ENCODE measurements at regions of chr3 and their contacts with region 1.

Region 1: DNA sequence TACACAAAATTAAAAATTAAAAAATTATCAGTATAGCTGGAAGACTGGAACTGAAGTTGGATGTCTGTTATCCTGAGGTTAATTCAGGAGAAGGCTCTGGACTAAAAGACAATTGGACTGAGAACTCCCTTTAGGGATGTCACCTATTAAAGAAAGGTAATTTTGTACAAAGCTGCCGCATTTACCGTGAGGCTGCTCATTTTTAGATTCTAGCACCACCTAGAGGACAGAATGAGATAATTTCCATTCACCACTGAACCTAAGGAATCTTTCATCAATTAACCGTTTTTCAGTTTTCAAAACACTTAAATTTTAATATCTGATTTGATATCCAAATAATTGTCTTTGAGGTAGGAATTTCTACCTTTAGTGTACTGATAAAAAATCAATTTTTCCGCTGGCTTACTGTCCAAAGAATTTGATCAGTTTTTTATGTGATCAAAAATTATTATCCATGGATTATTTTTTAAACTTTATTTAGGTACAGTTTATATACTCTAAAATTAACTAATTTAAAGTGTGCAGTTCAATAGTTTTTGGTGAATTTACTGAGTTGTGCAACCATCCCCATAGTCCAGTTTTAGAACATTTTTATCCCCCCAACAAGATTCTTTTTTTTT is 106.7 kb upstream of the TNIK start:
- DNase-seq: peak; percentile 26 to 29
- ATAC-seq: peak in 1 of 2 experiments; percentile 70; a peak in 3 of 6 replicates
- H3K4me3 ChIP-seq: no peak overlapping the region
- H3K27ac ChIP-seq: no peak overlapping the region
- H3K4me1 ChIP-seq: peaks cover 18% of the 10 kb centered on the region
- CTCF ChIP-seq: peak; percentile 79
- EP300 ChIP-seq: no peak
- POLR2A ChIP-seq: no peak
- RAD21 ChIP-seq: peak; percentile 86

Region 2: DNA sequence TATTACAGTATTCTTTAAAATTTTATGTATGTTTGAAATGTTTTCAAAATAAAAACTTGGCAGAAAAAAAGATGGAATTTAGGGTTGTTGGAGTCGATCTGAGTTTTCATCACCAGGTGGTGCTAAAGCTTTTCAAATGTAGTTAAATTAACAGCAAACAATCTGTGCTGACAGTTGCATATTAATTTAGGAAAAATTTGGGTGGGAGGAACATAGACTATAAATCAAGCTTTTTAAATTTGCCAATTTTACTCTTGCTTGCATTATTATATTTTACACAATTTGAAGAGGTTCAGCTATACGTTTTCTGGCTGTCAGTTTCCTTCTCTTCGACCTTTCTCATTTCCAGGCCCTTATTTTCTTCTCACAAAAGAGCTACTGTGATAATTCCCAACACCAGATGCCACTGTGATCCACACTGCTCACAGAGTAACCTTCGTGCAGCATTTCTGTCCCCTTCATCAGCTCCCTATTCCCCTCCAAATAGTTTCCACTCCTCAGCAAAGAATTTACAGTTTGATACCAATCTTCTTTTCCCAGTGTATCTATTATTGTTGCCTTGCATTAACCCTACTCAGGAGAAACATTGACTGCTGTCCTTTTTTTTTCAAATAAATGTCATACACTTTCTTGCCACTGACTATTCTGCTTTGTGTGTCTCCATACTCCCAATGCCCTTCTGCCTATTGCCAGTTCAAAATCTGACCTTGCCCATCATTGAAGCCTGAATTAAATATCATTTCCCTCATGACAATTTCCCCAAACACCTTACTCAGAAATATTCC is 605.1 kb before region 1 on chr3:
- CTCF ChIA-PET with region 1: interaction called, 19 read pairs
- POLR2A ChIA-PET with region 1: no interaction called
- DNase-seq: peak in 1 of 2 experiments; percentile 33
- ATAC-seq: peak in 1 of 2 experiments; percentile 45; a peak in 2 of 6 replicates
- H3K4me3 ChIP-seq: no peak overlapping the region
- H3K27ac ChIP-seq: peak overlapping the region; percentile 52 to 72
- H3K4me1 ChIP-seq: peaks cover 13% of the 10 kb centered on the region
- CTCF ChIP-seq: peak; percentile 81
- EP300 ChIP-seq: no peak
- POLR2A ChIP-seq: no peak
- RAD21 ChIP-seq: peak; percentile 77 to 94

Region 3: DNA sequence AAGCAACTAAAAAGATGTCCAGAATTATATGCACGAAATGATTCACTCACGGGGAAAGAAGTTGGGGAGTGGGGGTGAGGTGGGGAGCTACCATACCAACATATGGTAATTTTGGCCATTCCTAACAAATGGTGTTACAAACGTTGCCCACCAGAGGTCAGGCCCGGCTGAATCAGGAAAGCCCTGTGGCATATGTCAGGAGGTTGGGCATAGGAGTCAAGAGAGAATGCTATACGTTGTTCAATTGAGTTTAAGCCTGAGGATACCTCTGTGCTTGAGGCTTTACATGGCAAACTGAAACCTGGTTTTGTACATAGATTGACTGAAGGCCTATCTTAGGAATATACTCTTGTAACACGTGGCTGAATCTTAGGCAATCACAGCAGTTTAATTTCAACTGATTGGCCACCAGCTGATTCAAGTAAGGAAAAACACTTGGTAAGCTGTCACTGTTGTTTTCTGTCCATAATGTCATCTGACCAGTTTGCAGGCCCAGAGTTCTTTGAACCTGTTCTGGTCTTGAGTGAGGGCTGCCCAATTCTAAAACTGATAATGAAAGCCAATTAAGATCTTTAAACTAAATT is 517.0 kb before region 1 on chr3:
- CTCF ChIA-PET with region 1: interaction called, 22 read pairs
- POLR2A ChIA-PET with region 1: no interaction called
- DNase-seq: peak; percentile 39 to 59
- ATAC-seq: peak; percentile 89 to 92
- H3K4me3 ChIP-seq: no peak overlapping the region
- H3K27ac ChIP-seq: peak overlapping the region; percentile 19 to 60; a peak in 4 of 6 replicates
- H3K4me1 ChIP-seq: peaks cover 36% of the 10 kb centered on the region
- CTCF ChIP-seq: peak; percentile 63
- EP300 ChIP-seq: no peak
- POLR2A ChIP-seq: no peak
- RAD21 ChIP-seq: peak; percentile 84 to 86

Region 4: GRCh38 chr3:171187706-171188290 is 379.1 kb before region 1 on chr3:
- CTCF ChIA-PET with region 1: interaction called, 27 read pairs
- POLR2A ChIA-PET with region 1: no interaction called
- DNase-seq: peak; percentile 9 to 28
- ATAC-seq: peak in 1 of 2 experiments; percentile 82; a peak in 3 of 6 replicates
- H3K4me3 ChIP-seq: no peak overlapping the region
- H3K27ac ChIP-seq: no peak overlapping the region
- H3K4me1 ChIP-seq: peaks cover 23% of the 10 kb centered on the region
- CTCF ChIP-seq: peak; percentile 59
- EP300 ChIP-seq: no peak
- POLR2A ChIP-seq: no peak
- RAD21 ChIP-seq: peak; percentile 63 to 64

Region 5: GRCh38 chr3:171498921-171499320 is 68.0 kb before region 1 on chr3:
- CTCF ChIA-PET with region 1: no interaction called
- POLR2A ChIA-PET with region 1: no interaction called
- DNase-seq: no peak
- ATAC-seq: no peak
- H3K4me3 ChIP-seq: no peak overlapping the region
- H3K27ac ChIP-seq: no peak overlapping the region
- H3K4me1 ChIP-seq: no peaks in the 10 kb centered on the region
- CTCF ChIP-seq: no peak
- EP300 ChIP-seq: no peak
- POLR2A ChIP-seq: no peak
- RAD21 ChIP-seq: no peak

Region 6: DNA sequence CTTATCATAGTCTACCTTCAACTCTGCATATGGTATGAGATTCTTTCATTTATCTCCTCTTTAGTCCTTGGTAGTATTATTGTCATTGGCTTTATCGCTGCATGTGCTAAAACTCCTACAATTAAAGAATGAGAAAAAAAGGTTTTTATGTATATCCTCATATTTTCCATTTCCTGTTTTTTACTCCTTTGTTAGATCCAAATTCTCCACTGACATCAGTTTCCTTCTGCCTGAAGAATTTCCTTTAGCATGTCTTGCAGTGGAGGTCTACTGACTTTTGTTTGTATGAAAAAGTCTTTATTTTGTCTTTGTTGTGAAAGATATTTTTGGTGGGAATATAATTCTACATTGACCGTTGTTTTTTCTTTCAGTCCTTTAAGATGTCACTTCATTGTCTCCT is 25.7 kb before region 1 on chr3:
- CTCF ChIA-PET with region 1: interaction called, 11 read pairs
- POLR2A ChIA-PET with region 1: no interaction called
- DNase-seq: no peak
- ATAC-seq: no peak
- H3K4me3 ChIP-seq: no peak overlapping the region
- H3K27ac ChIP-seq: no peak overlapping the region
- H3K4me1 ChIP-seq: peaks cover 7% of the 10 kb centered on the region; the same call in 2 of the 3 replicates
- CTCF ChIP-seq: no peak
- EP300 ChIP-seq: no peak
- POLR2A ChIP-seq: no peak
- RAD21 ChIP-seq: no peak

Region 7: GRCh38 chr3:171607452-171607851 is 40.5 kb after region 1 on chr3:
- CTCF ChIA-PET with region 1: no interaction called
- POLR2A ChIA-PET with region 1: no interaction called
- DNase-seq: no peak
- ATAC-seq: no peak
- H3K4me3 ChIP-seq: no peak overlapping the region
- H3K27ac ChIP-seq: no peak overlapping the region
- H3K4me1 ChIP-seq: no peaks in the 10 kb centered on the region
- CTCF ChIP-seq: no peak
- EP300 ChIP-seq: no peak
- POLR2A ChIP-seq: no peak
- RAD21 ChIP-seq: no peak

Region 8: GRCh38 chr3:171632766-171633165 is 65.9 kb after region 1 on chr3:
- CTCF ChIA-PET with region 1: no interaction called
- POLR2A ChIA-PET with region 1: no interaction called
- DNase-seq: no peak
- ATAC-seq: no peak
- H3K4me3 ChIP-seq: no peak overlapping the region
- H3K27ac ChIP-seq: no peak overlapping the region
- H3K4me1 ChIP-seq: no peaks in the 10 kb centered on the region
- CTCF ChIP-seq: no peak
- EP300 ChIP-seq: no peak
- POLR2A ChIP-seq: no peak
- RAD21 ChIP-seq: no peak